Uterus (tissue), 4 donors: ENCODE measurements at regions of chr19 and their contacts with region 1.

Region 1: DNA sequence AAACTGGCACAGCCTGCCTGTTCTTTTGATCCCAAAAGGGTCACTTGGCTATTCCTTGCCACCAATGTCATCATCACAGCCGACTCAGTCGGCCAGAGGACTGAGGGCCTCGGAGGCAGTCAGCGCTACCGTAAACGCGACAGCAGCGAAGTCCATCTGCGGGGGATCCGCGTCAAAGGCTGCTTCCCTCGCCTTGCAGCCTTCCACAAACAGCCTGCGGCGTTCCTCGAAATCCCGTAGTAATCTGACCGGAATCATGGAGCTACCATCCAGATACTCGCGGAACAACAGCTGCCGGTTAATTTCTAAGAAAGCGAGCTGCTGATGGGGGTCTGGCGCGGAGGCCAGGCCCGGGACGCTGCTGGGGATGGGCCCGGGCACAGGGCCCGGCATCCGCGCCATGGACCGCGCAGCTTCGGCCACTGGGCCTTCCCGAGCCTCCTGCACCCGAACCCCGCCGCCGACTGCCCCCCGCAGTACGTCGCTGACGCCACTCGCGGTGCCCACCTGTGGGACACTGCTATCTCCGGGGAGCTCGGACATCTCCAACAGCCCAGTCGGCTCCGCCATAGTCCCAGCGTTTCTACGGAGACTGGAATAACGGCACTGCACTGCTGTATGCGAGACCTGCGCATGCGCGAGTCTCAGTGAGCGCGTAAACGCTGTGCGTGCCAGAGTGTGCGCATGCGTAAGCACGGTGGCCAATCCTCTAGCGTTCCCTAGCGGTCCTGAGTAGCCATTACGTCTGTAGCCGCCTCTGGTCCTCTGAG is at the start of gene EID2B:
- DNase-seq: peak; percentile 95
- H3K4me3 ChIP-seq: peak within 1 kb of the TSS; percentile 55 to 81
- H3K27ac ChIP-seq: peak within 1 kb of the TSS; percentile 82 to 88
- H3K4me1 ChIP-seq: no peaks in the 10 kb centered on the region
- H3K27me3 ChIP-seq: no peaks in the 10 kb centered on the region
- CTCF ChIP-seq: peak; percentile 99 to 100 (median 100)
- POLR2A ChIP-seq: peak; percentile 80
- total RNA-seq, gene EID2B: 0.29 to 6.6 (median 5.1) TPM

Region 2: GRCh38 chr19:39474139-39474622 is 58.2 kb before region 1 on chr19:
- intact Hi-C with region 1: loop called (anchors 10 kb)
- DNase-seq: peak; percentile 36 to 49
- H3K4me3 ChIP-seq: no peak overlapping the region
- H3K27ac ChIP-seq: no peak overlapping the region
- H3K4me1 ChIP-seq: no peaks in the 10 kb centered on the region
- H3K27me3 ChIP-seq: no peaks in the 10 kb centered on the region
- CTCF ChIP-seq: peak; percentile 41 to 74 (median 58)
- POLR2A ChIP-seq: no peak

Region 3: GRCh38 chr19:39590265-39590664 is 57.8 kb after region 1 on chr19:
- intact Hi-C with region 1: no loop called
- DNase-seq: no peak
- H3K4me3 ChIP-seq: no peak overlapping the region
- H3K27ac ChIP-seq: no peak overlapping the region
- H3K4me1 ChIP-seq: no peaks in the 10 kb centered on the region
- H3K27me3 ChIP-seq: no peaks in the 10 kb centered on the region
- CTCF ChIP-seq: no peak
- POLR2A ChIP-seq: no peak